A673 (cell line): ENCODE measurements at regions of chr9 and their contacts with region 1.

Region 1: GRCh38 chr9:112333639-112334431 is 416 bp upstream of the PTBP3 start:
- DNase-seq: peak; percentile 98
- H3K4me3 ChIP-seq: peak overlapping the region; percentile 92
- H3K27ac ChIP-seq: peak overlapping the region; percentile 85
- H3K4me1 ChIP-seq: peaks cover 7% of the 10 kb centered on the region
- H3K27me3 ChIP-seq: no peaks in the 10 kb centered on the region
- CTCF ChIP-seq: peak; percentile 58

Region 2: DNA sequence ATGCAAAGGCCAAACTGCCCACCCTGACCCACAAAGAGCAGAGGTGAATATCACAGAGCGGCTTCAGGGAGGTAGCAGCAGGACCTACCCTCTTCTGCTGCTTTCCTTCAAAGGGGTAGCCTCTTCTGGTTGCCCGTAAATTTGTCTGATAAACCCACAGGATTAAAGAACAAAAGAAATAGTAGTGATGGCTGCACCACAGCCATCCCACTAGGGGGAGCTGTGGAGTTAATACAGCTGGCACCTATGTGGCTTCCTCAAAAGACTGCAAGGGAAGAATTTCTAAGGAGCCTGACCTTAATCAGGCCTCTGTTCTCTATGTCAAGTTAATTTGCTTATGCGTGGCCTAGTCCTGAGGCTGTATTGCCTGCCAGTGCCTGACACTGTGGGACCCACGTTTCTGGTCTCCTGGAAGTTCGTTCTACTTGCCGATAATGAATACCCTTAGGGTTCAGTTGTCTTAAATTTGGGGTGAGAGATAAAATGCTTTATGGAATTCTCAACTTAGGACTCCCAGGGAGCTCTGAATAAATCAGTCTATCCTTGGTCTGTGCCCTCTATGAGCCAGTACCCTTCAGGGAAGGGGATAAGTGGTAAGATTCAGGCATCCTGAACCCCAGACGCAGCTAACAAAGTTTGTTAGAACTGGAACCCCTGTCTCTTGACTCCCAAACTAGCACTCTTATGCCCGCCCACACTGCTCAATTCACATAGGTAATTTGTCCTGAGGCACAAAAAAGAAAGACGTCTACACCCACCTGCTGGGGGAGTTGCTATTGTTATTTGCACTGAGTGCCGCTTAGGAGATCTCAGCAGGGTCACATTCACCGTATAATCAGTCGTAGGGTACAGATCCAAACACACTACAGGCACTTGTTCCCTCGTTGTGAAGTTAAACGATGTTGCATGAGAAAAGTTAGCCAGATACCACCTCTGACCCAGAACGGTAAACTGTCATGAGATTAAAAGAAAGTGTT is 235.8 kb before region 1 on chr9:
- CTCF ChIA-PET with region 1: interaction called, 14 read pairs
- POLR2A ChIA-PET with region 1: no interaction called
- intact Hi-C with region 1: loop called (anchors 1 kb)
- DNase-seq: peak; percentile 86
- H3K4me3 ChIP-seq: no peak overlapping the region
- H3K27ac ChIP-seq: no peak overlapping the region
- H3K4me1 ChIP-seq: peaks cover 4% of the 10 kb centered on the region
- H3K27me3 ChIP-seq: no peaks in the 10 kb centered on the region
- CTCF ChIP-seq: peak; percentile 93

Region 3: DNA sequence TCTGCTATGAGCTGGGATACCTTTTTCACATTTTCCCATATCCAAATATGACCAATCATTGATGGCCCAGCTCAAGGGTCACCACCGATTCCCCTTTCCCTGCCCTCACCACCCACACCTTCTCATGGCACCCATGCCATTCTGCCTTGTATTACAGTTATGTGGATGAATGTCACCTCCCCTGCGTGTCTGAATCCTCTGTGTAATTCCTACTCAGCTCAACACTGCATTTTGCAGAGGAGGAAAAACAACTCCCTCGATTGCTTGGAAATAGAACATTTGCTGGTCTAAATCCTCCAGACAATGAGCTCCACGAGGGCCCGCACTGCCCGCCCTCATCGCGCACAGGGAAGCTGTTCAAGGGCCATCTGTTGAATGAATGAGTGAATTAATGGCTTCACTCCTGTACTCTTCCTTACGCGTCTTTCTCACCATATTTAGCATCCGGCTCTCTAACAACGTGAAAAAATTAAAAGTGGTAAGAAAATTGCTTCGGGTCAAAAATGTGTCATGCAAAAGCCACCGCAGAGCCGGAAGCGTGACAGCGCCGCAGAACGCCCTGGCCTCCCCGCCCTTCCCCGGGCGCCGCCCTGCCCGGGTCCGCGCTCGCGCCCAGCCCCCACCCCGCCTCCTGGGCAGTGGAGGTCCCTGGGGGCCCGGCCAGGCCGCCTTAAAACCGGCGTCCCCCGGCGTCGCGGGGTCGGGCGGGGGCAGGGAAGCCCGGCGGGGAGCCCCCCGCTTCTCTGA is 159.4 kb before region 1 on chr9:
- CTCF ChIA-PET with region 1: no interaction called
- POLR2A ChIA-PET with region 1: no interaction called
- intact Hi-C with region 1: loop called (anchors 5 kb)
- DNase-seq: peak; percentile 54
- H3K4me3 ChIP-seq: peak overlapping the region; percentile 70
- H3K27ac ChIP-seq: peak overlapping the region; percentile 59
- H3K4me1 ChIP-seq: no peaks in the 10 kb centered on the region
- H3K27me3 ChIP-seq: no peaks in the 10 kb centered on the region
- CTCF ChIP-seq: no peak

Region 4: GRCh38 chr9:112348257-112349007 is 14.6 kb after region 1 on chr9:
- CTCF ChIA-PET with region 1: interaction called, 4 read pairs
- POLR2A ChIA-PET with region 1: interaction called, 10 read pairs
- intact Hi-C with region 1: no loop called
- DNase-seq: peak; percentile 94
- H3K4me3 ChIP-seq: peak overlapping the region; percentile 34
- H3K27ac ChIP-seq: peak overlapping the region; percentile 68
- H3K4me1 ChIP-seq: peaks cover 16% of the 10 kb centered on the region
- H3K27me3 ChIP-seq: no peaks in the 10 kb centered on the region
- CTCF ChIP-seq: no peak

Region 5: GRCh38 chr9:112532427-112532826 is 198.6 kb after region 1 on chr9:
- CTCF ChIA-PET with region 1: interaction called, 14 read pairs
- POLR2A ChIA-PET with region 1: no interaction called
- intact Hi-C with region 1: no loop called
- DNase-seq: peak; percentile 68
- H3K4me3 ChIP-seq: no peak overlapping the region
- H3K27ac ChIP-seq: peak overlapping the region; percentile 20
- H3K4me1 ChIP-seq: peaks cover 45% of the 10 kb centered on the region
- H3K27me3 ChIP-seq: no peaks in the 10 kb centered on the region
- CTCF ChIP-seq: no peak